K562 (cell line): ENCODE measurements at regions of chr14 and their contacts with region 1.

Region 1: GRCh38 chr14:35687335-35687939 is 121.7 kb downstream of the RALGAPA1 start:
- DNase-seq: peak; percentile 11 to 55 (median 21)
- ATAC-seq: peak; percentile 84
- H3K4me3 ChIP-seq: no peak overlapping the region
- H3K27ac ChIP-seq: no peak overlapping the region
- H3K4me1 ChIP-seq: no peaks in the 10 kb centered on the region
- H3K27me3 ChIP-seq: no peaks in the 10 kb centered on the region
- CTCF ChIP-seq: peak; percentile 59 to 87 (median 72)
- EP300 ChIP-seq: no peak
- POLR2A ChIP-seq: no peak
- RAD21 ChIP-seq: peak; percentile 83 to 84

Region 2: DNA sequence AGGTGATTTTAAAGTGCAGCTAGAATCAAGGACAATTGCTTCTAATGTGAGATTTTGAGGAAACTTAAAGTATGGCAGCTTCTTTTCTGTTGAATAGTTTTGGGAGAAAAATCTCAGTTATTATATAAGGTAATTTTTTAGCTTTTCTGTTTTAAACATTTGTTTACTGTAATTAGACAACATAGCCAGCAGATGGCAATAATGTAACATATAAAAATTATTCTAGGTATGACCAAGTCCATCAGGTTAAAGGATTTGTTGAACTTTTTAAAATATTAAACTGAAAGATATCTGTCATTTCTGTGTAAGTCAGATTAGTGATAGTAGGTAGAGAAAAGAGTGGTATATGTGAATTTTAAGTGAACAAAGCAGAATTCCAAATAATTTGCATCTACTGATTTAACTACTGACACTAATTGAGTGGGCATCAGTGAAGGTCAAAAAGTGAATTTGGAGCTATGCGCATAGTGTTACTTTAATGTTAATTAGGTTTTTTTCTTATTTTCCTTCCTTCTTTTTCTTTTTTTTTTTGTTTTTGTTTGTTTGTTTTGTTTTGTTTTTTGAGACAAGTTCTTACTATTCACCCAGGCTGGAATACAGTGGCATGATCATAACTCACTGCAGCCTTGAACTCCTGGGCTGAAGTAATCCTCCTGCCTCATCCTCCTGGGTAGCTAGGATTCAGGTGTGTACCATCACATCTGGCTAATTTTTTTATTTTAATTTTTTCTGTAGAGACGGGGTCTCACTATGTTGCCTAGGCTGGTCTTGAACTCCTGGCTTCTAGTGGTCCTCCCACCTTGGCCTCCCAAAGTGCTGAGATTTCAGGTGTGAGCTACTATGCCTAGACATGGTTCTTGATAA is 546.5 kb before region 1 on chr14:
- CTCF ChIA-PET with region 1: interaction called, 7 read pairs
- POLR2A ChIA-PET with region 1: no interaction called
- in situ Hi-C with region 1: loop called (anchors 10 kb)
- intact Hi-C with region 1: loop called (anchors 5 kb)
- DNase-seq: peak in 1 of 4 experiments; percentile 10
- ATAC-seq: no peak
- H3K4me3 ChIP-seq: no peak overlapping the region
- H3K27ac ChIP-seq: no peak overlapping the region
- H3K4me1 ChIP-seq: no peaks in the 10 kb centered on the region
- H3K27me3 ChIP-seq: no peaks in the 10 kb centered on the region
- CTCF ChIP-seq: peak in 2 of 3 experiments; percentile 15 to 47; a peak in 3 of 6 replicates
- EP300 ChIP-seq: no peak
- POLR2A ChIP-seq: no peak
- RAD21 ChIP-seq: peak; percentile 62 to 63

Region 3: DNA sequence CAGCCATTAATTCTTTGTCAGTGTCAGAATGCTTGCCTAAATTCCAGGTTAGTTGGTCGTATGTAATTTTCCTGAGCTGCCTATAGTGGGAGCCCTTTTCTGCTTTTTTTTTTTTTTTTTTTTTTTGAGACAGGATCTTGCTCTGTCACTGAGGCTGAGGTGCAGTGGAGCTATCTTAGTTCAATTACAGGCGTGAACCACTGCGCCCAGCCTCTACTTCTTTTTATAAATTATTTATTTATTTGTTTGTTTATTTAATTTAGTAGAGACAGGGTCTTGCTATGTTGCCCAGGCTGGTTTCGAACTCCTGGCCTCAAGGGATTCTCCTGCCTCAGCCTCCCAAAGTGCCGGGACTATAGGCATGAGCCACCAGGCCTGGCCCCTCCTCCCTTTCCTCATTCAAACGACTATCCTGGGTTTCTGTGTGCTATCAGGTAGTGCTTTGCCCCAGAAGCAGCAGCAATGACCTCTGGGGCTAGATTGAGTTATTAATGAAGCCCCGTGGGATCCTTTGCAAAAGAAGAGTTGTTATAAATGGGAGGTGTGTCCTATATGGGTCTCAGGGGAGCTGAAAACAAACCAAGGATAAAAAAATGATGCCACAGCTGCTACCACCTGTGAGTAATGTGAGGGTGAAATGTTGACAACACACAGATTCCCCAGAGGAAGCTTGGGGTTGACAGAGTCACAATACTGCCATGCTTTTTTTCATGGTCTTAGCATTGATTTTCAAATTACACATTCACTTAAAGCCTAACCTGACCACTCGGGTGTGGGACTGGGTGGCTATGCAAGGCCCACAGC is 248.3 kb before region 1 on chr14:
- CTCF ChIA-PET with region 1: no interaction called
- POLR2A ChIA-PET with region 1: no interaction called
- in situ Hi-C with region 1: no loop called
- intact Hi-C with region 1: loop called (anchors 5 kb)
- DNase-seq: peak in 2 of 4 experiments; percentile 9 to 16
- ATAC-seq: peak; percentile 73
- H3K4me3 ChIP-seq: no peak overlapping the region
- H3K27ac ChIP-seq: no peak overlapping the region
- H3K4me1 ChIP-seq: peaks cover 0 to 3% of the 10 kb centered on the region in 2 experiments; a peak in 1 of 5 replicates
- H3K27me3 ChIP-seq: no peaks in the 10 kb centered on the region
- CTCF ChIP-seq: peak; percentile 41 to 59 (median 56); a peak in 4 of 6 replicates
- EP300 ChIP-seq: no peak
- POLR2A ChIP-seq: no peak
- RAD21 ChIP-seq: no peak

Region 4: GRCh38 chr14:35533357-35534207 is 153.9 kb before region 1 on chr14 and contains the start of gene INSM2:
- CTCF ChIA-PET with region 1: no interaction called
- POLR2A ChIA-PET with region 1: no interaction called
- in situ Hi-C with region 1: no loop called
- intact Hi-C with region 1: loop called (anchors 5 kb)
- DNase-seq: peak; percentile 62 to 69 (median 66)
- ATAC-seq: peak; percentile 89
- H3K4me3 ChIP-seq: peak within 1 kb of the TSS; percentile 41
- H3K27ac ChIP-seq: no peak within 1 kb of the TSS
- H3K4me1 ChIP-seq: peaks cover 0 to 28% of the 10 kb centered on the region in 2 experiments; a peak in 2 of 5 replicates
- H3K27me3 ChIP-seq: peaks cover 7 to 18% of the 10 kb centered on the region in 2 experiments; a peak in 4 of 5 replicates
- CTCF ChIP-seq: 0 out of 6 replicates have a peak, but pooled peaks of 1 of the 3 experiments have one; percentile 1
- EP300 ChIP-seq: no peak
- POLR2A ChIP-seq: no peak
- RAD21 ChIP-seq: no peak
- polyA plus RNA-seq, gene INSM2: not detected

Region 5: DNA sequence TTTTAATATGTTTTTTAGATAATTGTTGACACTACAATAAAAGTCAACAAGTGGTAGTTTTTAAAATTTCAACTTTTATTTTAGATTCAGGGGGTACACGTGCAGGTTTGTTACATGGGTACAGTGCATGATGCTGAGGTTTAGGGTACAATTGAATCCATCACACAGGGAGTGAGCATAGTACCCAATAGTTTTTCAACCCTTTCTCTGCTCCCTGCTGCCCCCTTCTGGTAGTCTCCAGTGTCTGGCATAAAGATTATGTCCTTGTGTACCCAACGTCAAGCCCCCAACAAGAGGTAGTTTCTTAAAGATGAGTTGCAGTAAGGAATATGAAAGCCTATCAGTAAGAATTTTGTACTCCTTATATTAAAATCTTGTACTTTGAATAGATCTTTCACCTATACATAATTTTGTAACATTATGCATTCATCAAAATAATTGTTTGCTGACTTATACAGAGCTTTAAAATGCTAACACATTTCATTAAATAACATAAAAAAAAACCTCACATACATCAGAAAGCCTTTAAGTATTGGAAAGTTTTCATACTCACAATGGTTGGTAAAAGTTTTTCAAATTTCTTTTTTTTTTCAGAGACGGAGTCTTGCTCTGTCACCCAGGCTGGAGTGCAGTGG is 127.1 kb after region 1 on chr14:
- CTCF ChIA-PET with region 1: no interaction called
- POLR2A ChIA-PET with region 1: no interaction called
- in situ Hi-C with region 1: no loop called
- intact Hi-C with region 1: loop called (anchors 5 kb)
- DNase-seq: peak; percentile 24 to 70 (median 28)
- ATAC-seq: peak; percentile 85
- H3K4me3 ChIP-seq: no peak overlapping the region
- H3K27ac ChIP-seq: no peak overlapping the region
- H3K4me1 ChIP-seq: no peaks in the 10 kb centered on the region; a peak in 1 of 5 replicates
- H3K27me3 ChIP-seq: no peaks in the 10 kb centered on the region
- CTCF ChIP-seq: peak; percentile 53 to 62 (median 54)
- EP300 ChIP-seq: no peak
- POLR2A ChIP-seq: no peak
- RAD21 ChIP-seq: peak in 1 of 2 experiments; percentile 24; a peak in 1 of 4 replicates